ENCODE measurements at regions of chr7 and their contacts with region 1.

Region 1: GRCh38 chr7:19107356-19108146 is 9.9 kb downstream of the TWIST1 start:
- DNase-seq: no peak
- ATAC-seq: no peak
- H3K4me3 Mint-ChIP-seq: no peak overlapping the region
- H3K27ac Mint-ChIP-seq: no peak overlapping the region
- H3K4me1 Mint-ChIP-seq: peaks cover 2% of the 10 kb centered on the region
- H3K27me3 Mint-ChIP-seq: peaks cover 85% of the 10 kb centered on the region

Region 2: GRCh38 chr7:19144661-19145433 is 37.3 kb after region 1 on chr7 and contains the start of gene FERD3L:
- CTCF ChIA-PET with region 1: no interaction called
- POLR2A ChIA-PET with region 1: no interaction called
- intact Hi-C with region 1: loop called in 1 of 2 experiments (anchors 5 kb)
- DNase-seq: no peak
- ATAC-seq: no peak
- H3K4me3 Mint-ChIP-seq: no peak within 1 kb of the TSS
- H3K27ac Mint-ChIP-seq: no peak within 1 kb of the TSS
- H3K4me1 Mint-ChIP-seq: no peaks in the 10 kb centered on the region
- H3K27me3 Mint-ChIP-seq: peaks cover 38% of the 10 kb centered on the region
- total RNA-seq, gene FERD3L: not detected

Region 3: GRCh38 chr7:19815546-19815945 is 708.0 kb after region 1 on chr7:
- CTCF ChIA-PET with region 1: no interaction called
- POLR2A ChIA-PET with region 1: no interaction called
- intact Hi-C with region 1: no loop called
- DNase-seq: no peak
- ATAC-seq: no peak
- H3K4me3 Mint-ChIP-seq: no peak overlapping the region
- H3K27ac Mint-ChIP-seq: no peak overlapping the region
- H3K4me1 Mint-ChIP-seq: no peaks in the 10 kb centered on the region
- H3K27me3 Mint-ChIP-seq: no peaks in the 10 kb centered on the region

Measured in activated CD4-positive, alpha-beta T cell treated with anti-CD3 and anti-CD28 coated beads for 36 hours (primary cell).